WTC11 (cell line): ENCODE measurements at regions of chr6 and their contacts with region 1.

Region 1: DNA sequence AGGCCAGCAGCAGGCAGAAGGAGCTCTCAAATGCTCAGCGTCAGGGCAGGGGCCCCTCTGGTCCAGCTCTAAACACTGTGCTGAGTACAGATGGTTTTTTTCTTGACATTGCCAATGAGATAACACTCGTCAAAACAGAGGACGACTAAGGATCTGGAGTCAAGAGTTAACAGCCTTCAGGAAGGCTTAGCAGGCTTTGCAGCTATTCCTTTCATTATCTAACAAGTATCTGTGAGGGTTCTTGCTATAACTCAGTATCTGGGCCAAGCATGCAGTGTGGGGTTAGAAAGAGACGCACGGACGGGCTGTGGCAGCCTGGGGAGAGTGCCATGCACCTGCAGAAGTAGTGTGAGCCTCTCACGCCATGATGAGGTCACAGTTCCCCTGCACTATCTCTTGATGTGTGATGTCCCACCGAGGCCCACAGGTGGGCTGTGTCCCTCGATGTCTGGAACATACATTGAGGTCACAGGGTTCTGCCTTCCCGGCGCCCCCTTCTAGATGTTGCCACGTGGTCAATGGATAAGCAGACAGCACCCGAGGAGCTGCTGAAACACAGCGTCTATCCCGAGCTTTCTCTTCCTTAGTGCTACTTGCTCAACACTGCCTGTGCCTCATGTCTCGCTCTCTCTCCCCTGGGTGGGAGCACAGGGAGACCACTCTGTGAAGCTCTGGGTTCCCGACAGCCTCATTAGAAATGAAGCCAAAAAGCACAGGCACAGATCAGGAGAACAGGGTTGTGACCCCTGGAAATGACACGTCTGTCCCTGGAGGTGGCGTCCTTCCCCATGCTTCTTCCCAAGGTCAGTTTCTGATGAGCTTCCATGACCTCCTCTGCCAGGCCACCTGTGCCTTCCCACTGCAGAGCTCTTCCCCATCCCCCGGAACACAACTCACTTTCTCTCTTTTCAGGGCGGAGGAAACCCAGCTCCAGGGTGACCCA is 85.5 kb upstream of the RPS6KA2 start:
- DNase-seq: peak; percentile 41
- ATAC-seq: peak; percentile 86
- H3K4me3 Mint-ChIP-seq: no peak overlapping the region
- H3K27ac Mint-ChIP-seq: no peak overlapping the region
- H3K4me1 Mint-ChIP-seq: peaks cover 6% of the 10 kb centered on the region
- H3K27me3 Mint-ChIP-seq: peaks cover 8% of the 10 kb centered on the region
- CTCF ChIP-seq: no peak

Region 2: GRCh38 chr6:166757232-166758135 is 44.9 kb after region 1 on chr6:
- CTCF ChIA-PET with region 1: interaction called, 11 read pairs
- POLR2A ChIA-PET with region 1: no interaction called
- DNase-seq: no peak
- ATAC-seq: peak; percentile 74
- H3K4me3 Mint-ChIP-seq: no peak overlapping the region; the same call in 1 of the 2 replicates
- H3K27ac Mint-ChIP-seq: no peak overlapping the region; the same call in 1 of the 2 replicates
- H3K4me1 Mint-ChIP-seq: peaks cover 39% of the 10 kb centered on the region
- H3K27me3 Mint-ChIP-seq: no peaks in the 10 kb centered on the region; the same call in 1 of the 2 replicates
- CTCF ChIP-seq: no peak

Region 3: DNA sequence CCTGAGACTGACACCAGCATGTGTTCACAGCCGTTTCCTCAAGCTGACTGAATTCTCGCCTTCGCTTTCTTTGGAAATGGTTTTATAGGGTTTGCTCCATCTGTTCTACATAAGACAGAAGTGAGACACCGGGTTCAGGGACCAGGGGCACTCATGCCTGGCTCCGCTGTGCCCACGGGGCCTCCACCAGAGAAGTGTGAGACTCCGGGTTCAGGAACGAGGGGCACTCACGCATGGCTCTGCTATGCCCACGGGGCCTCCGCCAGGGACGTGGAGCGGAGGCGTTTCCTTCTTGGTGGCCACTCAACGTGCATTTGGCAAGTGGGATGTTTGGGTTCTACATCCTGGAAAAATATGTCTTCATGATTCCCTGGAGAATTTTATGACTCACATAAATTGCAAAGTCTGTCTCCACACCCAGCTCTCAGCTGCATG is 137.2 kb after region 1 on chr6:
- CTCF ChIA-PET with region 1: no interaction called
- POLR2A ChIA-PET with region 1: no interaction called
- DNase-seq: no peak
- ATAC-seq: no peak
- H3K4me3 Mint-ChIP-seq: no peak overlapping the region
- H3K27ac Mint-ChIP-seq: no peak overlapping the region
- H3K4me1 Mint-ChIP-seq: no peaks in the 10 kb centered on the region; the same call in 1 of the 2 replicates
- H3K27me3 Mint-ChIP-seq: no peaks in the 10 kb centered on the region
- CTCF ChIP-seq: no peak